ENCODE measurements at regions of chr15 and their contacts with region 1.

Region 1: GRCh38 chr15:90071208-90071807 is 31.0 kb downstream of the IDH2 start:
- DNase-seq: peak; percentile 84
- H3K4me3 Mint-ChIP-seq: no peak overlapping the region
- H3K27ac Mint-ChIP-seq: no peak overlapping the region
- H3K4me1 Mint-ChIP-seq: peaks cover 21% of the 10 kb centered on the region
- H3K27me3 Mint-ChIP-seq: no peaks in the 10 kb centered on the region

Region 2: GRCh38 chr15:89828241-89829082 is 242.8 kb before region 1 on chr15:
- CTCF ChIA-PET with region 1: no interaction called
- POLR2A ChIA-PET with region 1: no interaction called
- intact Hi-C with region 1: no loop called
- DNase-seq: no peak
- H3K4me3 Mint-ChIP-seq: no peak overlapping the region
- H3K27ac Mint-ChIP-seq: no peak overlapping the region
- H3K4me1 Mint-ChIP-seq: no peaks in the 10 kb centered on the region
- H3K27me3 Mint-ChIP-seq: peaks cover 2% of the 10 kb centered on the region

Region 3: DNA sequence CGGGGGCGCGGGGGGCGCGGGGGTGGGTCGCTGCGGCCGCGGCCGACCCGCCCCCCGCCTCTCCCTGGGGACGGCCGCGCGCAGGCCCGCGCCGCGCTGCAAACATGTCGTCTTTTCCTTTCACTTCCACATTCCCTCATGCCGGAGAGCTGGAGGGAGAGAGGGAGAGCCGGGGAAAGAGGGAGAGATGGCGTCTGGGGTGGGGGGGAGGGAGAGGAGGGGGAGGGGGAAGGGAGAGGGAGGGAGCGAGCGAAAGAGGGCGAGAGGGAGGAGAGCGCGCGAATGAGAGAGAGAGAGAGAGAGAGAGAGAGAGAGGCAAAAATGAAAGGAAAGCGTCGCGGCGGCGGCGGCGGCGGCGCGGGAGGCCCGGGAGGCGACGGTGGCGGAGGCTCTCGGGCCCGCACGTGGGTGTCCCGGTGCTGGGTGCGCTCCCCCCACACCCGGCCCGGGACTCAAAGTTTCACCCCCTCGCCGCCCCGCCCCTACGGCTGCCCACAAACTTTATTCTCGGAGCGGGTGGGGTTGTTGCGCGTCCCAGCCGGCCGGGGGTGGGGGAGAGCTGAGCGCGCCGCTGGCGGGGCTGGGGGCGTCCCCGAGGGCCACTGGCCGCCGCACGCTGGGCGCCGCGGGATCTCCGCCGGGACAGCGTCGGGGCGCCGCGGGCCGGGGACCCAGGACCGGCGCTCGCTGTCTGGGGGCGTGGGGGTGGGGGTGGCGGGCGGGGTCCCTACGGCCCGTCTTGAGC is 69.5 kb before region 1 on chr15:
- CTCF ChIA-PET with region 1: interaction called, 18 read pairs
- POLR2A ChIA-PET with region 1: no interaction called
- intact Hi-C with region 1: no loop called
- DNase-seq: peak; percentile 78
- H3K4me3 Mint-ChIP-seq: peak overlapping the region; percentile 86
- H3K27ac Mint-ChIP-seq: peak overlapping the region; percentile 86
- H3K4me1 Mint-ChIP-seq: peaks cover 52% of the 10 kb centered on the region
- H3K27me3 Mint-ChIP-seq: no peaks in the 10 kb centered on the region

Region 4: GRCh38 chr15:90031231-90031791 is 40.0 kb before region 1 on chr15:
- CTCF ChIA-PET with region 1: interaction called, 14 read pairs
- POLR2A ChIA-PET with region 1: no interaction called
- intact Hi-C with region 1: no loop called
- DNase-seq: peak; percentile 64
- H3K4me3 Mint-ChIP-seq: peak overlapping the region; percentile 5
- H3K27ac Mint-ChIP-seq: peak overlapping the region; percentile 80
- H3K4me1 Mint-ChIP-seq: peaks cover 56% of the 10 kb centered on the region
- H3K27me3 Mint-ChIP-seq: no peaks in the 10 kb centered on the region

Region 5: GRCh38 chr15:90059208-90059985 is 11.9 kb before region 1 on chr15:
- CTCF ChIA-PET with region 1: interaction called, 17 read pairs
- POLR2A ChIA-PET with region 1: interaction called, 3 read pairs
- intact Hi-C with region 1: no loop called
- DNase-seq: peak; percentile 92
- H3K4me3 Mint-ChIP-seq: peak overlapping the region; percentile 52
- H3K27ac Mint-ChIP-seq: peak overlapping the region; percentile 97
- H3K4me1 Mint-ChIP-seq: peaks cover 58% of the 10 kb centered on the region
- H3K27me3 Mint-ChIP-seq: no peaks in the 10 kb centered on the region

Region 6: DNA sequence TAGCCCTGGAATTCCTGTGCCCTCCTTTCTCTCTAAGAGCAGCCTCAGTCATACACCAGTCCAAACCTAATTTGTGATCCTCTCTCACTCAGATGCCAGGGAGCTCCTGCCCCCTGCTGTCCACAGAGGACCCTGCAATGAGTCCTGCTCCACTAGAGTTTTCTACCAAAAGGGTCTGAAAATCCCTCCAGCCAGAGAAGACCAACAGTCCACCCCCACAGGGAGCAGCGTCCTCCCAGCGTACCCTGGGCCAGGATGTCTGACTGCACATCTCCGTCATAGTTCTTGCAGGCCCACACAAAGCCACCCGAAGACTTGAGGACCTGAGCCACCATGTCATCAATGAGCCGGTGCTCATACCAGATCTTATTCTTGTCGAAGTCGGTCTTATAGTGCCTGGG is 15.6 kb after region 1 on chr15:
- CTCF ChIA-PET with region 1: interaction called, 17 read pairs
- POLR2A ChIA-PET with region 1: no interaction called
- intact Hi-C with region 1: no loop called
- DNase-seq: peak; percentile 73
- H3K4me3 Mint-ChIP-seq: no peak overlapping the region
- H3K27ac Mint-ChIP-seq: peak overlapping the region; percentile 49
- H3K4me1 Mint-ChIP-seq: peaks cover 4% of the 10 kb centered on the region
- H3K27me3 Mint-ChIP-seq: no peaks in the 10 kb centered on the region